ENCODE measurements at regions of chr9 and their contacts with region 1.

Region 1: GRCh38 chr9:130785940-130786508 is 49.0 kb upstream of the ABL1 start:
- DNase-seq: no peak
- ATAC-seq: peak in 5 of 8 donors; percentile 29 to 65 (median 37)
- H3K4me3 ChIP-seq: no peak overlapping the region
- H3K27ac ChIP-seq: peak overlapping the region in 3 of 10 donors; percentile 32 to 44 (median 38)
- H3K4me1 ChIP-seq: peaks cover 0 to 52% (median 42%) of the 10 kb centered on the region in 9 donors
- H3K27me3 ChIP-seq: no peaks in the 10 kb centered on the region
- CTCF ChIP-seq: no peak

Region 2: DNA sequence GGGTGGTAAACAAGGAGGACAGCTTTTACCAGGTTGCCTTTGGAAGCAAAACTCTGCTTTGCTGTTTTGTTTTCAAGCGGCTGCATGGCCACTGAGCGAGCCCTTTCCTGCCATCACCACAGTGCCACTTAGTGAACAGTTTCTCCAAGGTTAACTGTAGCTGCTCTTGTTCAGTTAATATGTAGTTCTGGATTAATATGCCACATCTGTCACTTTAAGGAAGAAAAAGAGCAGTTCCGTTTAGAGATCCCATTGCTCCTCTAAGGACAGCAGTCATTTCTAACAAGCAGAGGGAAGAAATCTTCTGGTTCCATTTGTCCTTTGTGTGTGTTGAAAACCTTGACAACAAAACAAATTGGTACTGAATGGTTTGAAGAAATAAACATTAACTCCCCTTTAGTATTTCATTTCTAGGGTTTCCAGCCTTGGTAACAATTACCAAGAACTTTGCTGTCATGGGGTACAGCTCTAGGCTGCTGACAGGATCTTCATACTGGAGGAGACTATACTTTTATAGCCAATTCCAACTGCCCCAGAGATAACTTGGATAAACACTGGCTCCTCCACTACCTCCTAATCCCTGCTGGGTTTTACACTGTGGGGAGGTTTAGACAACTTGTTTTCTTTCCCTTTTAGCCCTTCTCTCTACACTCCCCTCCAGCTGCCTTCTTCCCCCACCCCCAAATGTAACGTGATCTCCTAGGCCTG is 38.8 kb after region 1 on chr9:
- intact Hi-C with region 1: loop called in 2 of 10 experiments (anchors 5 kb)
- DNase-seq: peak in 1 of 2 donors; percentile 53
- ATAC-seq: peak; percentile 65 to 92 (median 90)
- H3K4me3 ChIP-seq: peak overlapping the region in 4 of 10 donors; percentile 4 to 19 (median 10)
- H3K27ac ChIP-seq: peak overlapping the region; percentile 1 to 84 (median 72)
- H3K4me1 ChIP-seq: peaks cover 14 to 43% (median 29%) of the 10 kb centered on the region in 9 donors
- H3K27me3 ChIP-seq: no peaks in the 10 kb centered on the region
- CTCF ChIP-seq: no peak

Region 3: DNA sequence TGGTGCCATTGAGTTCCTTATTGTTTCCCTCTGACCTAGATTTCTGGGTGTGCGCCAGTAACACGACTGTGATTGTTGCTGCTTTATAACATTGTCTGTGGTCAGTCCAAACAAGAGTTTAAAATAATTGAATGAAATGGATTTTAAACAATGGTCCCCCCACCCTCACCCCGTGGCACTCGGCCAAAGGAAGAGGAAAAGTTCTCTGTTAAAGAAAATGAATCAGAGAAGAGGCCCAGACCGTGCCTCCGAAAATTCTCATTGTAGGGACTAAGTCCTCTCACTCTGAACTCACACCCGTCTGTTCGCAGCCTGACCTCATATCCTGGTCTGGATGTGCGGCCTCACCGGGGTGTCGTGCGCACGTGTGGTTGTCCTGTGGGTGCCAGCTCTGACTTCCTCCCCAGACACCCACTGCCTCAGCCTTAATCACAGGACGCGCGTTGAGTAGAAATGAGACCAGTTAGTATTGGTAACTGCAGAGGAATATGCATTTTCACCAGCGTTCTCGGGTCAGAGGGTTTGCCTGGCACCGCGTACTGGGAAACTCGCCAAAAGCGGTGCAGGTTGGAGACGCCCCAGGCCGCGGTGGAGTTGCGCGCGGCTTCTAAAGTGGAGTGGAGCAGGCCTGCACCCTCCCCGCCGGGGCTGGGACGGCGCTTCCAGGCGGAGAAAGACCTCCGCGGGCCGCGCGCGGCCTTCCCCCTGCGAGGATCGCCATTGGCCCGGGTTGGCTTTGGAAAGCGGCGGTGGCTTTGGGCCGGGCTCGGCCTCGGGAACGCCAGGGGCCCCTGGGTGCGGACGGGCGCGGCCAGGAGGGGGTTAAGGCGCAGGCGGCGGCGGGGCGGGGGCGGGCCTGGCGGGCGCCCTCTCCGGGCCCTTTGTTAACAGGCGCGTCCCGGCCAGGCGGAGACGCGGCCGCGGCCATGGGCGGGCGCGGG is 48.6 kb after region 1 on chr9 and contains the start of gene ABL1:
- intact Hi-C with region 1: loop called in 6 of 10 experiments (anchors 5 to 10 kb)
- DNase-seq: peak; percentile 78 to 84
- ATAC-seq: peak; percentile 73 to 92 (median 86)
- H3K4me3 ChIP-seq: peak within 1 kb of the TSS; percentile 36 to 78 (median 68)
- H3K27ac ChIP-seq: peak within 1 kb of the TSS; percentile 92 to 96 (median 94)
- H3K4me1 ChIP-seq: peaks cover 10 to 75% (median 66%) of the 10 kb centered on the region in 9 donors
- H3K27me3 ChIP-seq: no peaks in the 10 kb centered on the region
- CTCF ChIP-seq: no peak
- total RNA-seq, gene ABL1: 27.1 to 48.8 (median 34.0) TPM